ENCODE measurements at regions of chr4 and their contacts with region 1.

Region 1: GRCh38 chr4:159349332-159349731 is 246.5 kb downstream of the RAPGEF2 start:
- DNase-seq: no peak

Region 2: DNA sequence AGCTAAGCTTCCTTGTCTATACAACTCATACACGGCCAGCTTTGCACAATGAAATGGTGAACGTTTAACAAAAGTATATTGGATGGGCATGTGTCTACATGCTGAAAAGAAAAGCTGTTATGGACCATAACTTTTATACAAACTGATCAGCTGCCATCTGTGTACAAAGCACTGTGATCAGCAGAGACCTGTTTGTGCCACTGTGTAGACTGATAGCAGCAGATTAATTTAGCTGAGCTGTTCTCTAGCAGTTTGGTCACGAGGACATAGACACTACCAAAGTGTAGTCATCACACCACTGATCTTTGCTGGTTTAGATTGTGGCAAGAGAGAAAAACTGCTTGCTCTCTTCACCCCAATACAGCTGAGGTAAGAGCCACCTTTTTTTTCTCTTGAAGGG is 122.0 kb before region 1 on chr4:
- intact Hi-C with region 1: no loop called
- DNase-seq: no peak

Region 3: GRCh38 chr4:159428975-159429692 is 79.8 kb after region 1 on chr4:
- intact Hi-C with region 1: loop called (anchors 5 kb)
- DNase-seq: no peak

Measured in cardiac septum (tissue), 1 donor.